ENCODE measurements at regions of chr2 and their contacts with region 1.

Region 1: DNA sequence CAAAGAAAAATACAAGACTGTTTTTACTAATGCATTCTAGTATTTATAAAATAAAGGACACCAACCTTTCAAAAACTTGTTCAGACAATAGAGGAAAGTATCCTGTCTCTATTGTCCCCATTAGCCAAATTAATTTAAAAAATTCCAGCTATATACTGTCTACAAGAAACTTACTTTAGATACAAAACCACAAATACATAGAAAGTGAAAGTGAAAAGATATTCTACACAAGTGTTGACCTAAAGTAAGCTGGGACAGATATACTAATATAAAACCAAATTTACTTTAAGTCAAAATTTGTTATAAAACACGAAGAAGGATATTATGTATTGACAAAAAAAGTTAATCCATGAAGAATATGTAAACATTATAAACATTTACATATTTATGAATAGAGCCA is 893.3 kb upstream of the TMEFF2 start:
- DNase-seq: no peak
- H3K4me3 ChIP-seq: no peak overlapping the region
- H3K27ac ChIP-seq: no peak overlapping the region
- H3K4me1 ChIP-seq: no peaks in the 10 kb centered on the region
- H3K27me3 ChIP-seq: no peaks in the 10 kb centered on the region
- CTCF ChIP-seq: no peak

Region 2: GRCh38 chr2:193112986-193113385 is 25.0 kb after region 1 on chr2:
- CTCF ChIA-PET with region 1: no interaction called
- POLR2A ChIA-PET with region 1: no interaction called
- intact Hi-C with region 1: loop called (anchors 1 kb)
- DNase-seq: no peak
- H3K4me3 ChIP-seq: no peak overlapping the region
- H3K27ac ChIP-seq: no peak overlapping the region
- H3K4me1 ChIP-seq: no peaks in the 10 kb centered on the region
- H3K27me3 ChIP-seq: no peaks in the 10 kb centered on the region
- CTCF ChIP-seq: no peak